ENCODE measurements at regions of chr6 and their contacts with region 1.

Region 1: DNA sequence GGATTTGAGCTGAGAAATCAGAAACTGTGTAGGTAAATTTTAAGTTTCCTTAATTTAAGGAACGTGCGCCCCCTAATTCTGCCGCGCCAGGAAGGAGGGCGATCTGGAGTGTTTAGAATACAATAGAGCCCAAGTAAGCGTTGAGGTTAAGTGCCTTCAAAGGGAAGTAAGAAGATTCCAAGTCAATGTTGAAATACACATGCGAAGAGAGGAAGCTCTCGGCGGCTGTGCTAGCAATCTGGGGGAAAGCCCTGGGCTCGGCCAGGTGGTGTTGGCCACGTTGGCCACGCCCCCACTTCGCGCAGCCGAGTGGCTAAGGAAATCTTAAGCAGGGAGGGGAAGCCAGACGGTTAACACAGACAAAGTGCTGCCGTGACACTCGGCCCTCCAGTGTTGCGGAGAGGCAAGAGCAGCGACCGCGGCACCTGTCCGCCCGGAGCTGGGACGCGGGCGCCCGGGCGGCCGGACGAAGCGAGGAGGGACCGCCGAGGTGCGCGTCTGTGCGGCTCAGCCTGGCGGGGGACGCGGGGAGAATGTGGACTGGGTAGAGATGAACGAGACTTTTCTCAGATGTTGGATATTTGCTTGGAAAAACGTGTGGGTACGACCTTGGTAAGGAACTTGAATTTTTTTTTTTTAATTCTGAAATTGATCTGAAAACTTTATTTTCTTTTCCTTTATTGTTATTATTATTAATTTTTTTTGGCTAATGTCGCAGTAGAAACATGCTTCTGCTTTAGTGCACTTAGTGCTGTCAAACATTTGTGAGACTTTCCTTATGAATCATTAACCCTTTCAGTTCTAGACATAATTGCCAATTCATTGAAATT is at the start of gene PRDM1:
- DNase-seq: peak; percentile 96
- H3K4me3 ChIP-seq: peak within 1 kb of the TSS; percentile 63 to 79 (median 73)
- H3K27ac ChIP-seq: peak within 1 kb of the TSS; percentile 86
- H3K4me1 ChIP-seq: peaks cover 37% of the 10 kb centered on the region
- H3K27me3 ChIP-seq: no peaks in the 10 kb centered on the region
- CTCF ChIP-seq: peak; percentile 31 to 67
- total RNA-seq, gene PRDM1: 5.7 to 17.7 TPM

Region 2: GRCh38 chr6:105431226-105431625 is 655.0 kb before region 1 on chr6:
- CTCF ChIA-PET with region 1: interaction called, 5 read pairs
- dilution Hi-C with region 1: no loop called
- in situ Hi-C with region 1: loop called in 1 of 2 experiments (anchors 25 kb)
- intact Hi-C with region 1: loop called (anchors 1 kb)
- DNase-seq: peak; percentile 46
- H3K4me3 ChIP-seq: no peak overlapping the region
- H3K27ac ChIP-seq: no peak overlapping the region
- H3K4me1 ChIP-seq: peaks cover 35% of the 10 kb centered on the region
- H3K27me3 ChIP-seq: no peaks in the 10 kb centered on the region
- CTCF ChIP-seq: peak; percentile 57

Region 3: GRCh38 chr6:105536961-105537360 is 549.2 kb before region 1 on chr6:
- CTCF ChIA-PET with region 1: no interaction called
- dilution Hi-C with region 1: no loop called
- in situ Hi-C with region 1: no loop called
- intact Hi-C with region 1: loop called (anchors 5 kb)
- DNase-seq: peak; percentile 96
- H3K4me3 ChIP-seq: no peak overlapping the region
- H3K27ac ChIP-seq: peak overlapping the region; percentile 96
- H3K4me1 ChIP-seq: peaks cover 19% of the 10 kb centered on the region
- H3K27me3 ChIP-seq: no peaks in the 10 kb centered on the region
- CTCF ChIP-seq: peak in 1 of 2 donors; percentile 10

Region 4: DNA sequence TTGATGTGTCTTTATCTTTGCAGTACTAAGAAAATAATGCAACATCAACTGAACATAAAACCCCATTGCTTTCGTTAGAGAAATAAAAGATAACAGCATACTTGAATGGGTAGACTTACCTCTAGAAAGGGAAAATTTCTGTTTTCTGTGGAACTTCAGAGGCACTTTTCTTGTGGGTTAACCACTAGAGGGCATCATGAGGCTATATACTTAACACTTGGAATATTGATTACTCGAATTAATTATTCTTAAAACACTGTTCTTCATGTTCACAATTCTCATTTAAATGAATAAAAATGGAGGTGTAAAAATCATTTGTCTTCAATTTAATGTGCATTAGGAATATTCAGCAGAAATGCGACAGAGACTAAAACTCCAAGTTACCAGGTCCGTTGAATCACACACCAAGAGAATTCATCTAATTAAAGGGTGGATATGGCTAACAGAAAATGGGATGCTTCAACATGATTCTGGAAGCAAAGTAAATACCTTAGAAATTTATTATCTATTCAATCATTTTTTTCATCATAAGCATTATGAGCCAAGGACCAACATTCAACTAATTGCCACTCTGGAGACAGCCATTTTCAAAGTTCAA is 352.5 kb before region 1 on chr6:
- CTCF ChIA-PET with region 1: no interaction called
- dilution Hi-C with region 1: no loop called
- in situ Hi-C with region 1: loop called in 1 of 2 experiments (anchors 25 kb)
- intact Hi-C with region 1: loop called (anchors 1 kb)
- DNase-seq: no peak
- H3K4me3 ChIP-seq: no peak overlapping the region
- H3K27ac ChIP-seq: no peak overlapping the region
- H3K4me1 ChIP-seq: no peaks in the 10 kb centered on the region
- H3K27me3 ChIP-seq: no peaks in the 10 kb centered on the region
- CTCF ChIP-seq: peak; percentile 59 to 62

Region 5: DNA sequence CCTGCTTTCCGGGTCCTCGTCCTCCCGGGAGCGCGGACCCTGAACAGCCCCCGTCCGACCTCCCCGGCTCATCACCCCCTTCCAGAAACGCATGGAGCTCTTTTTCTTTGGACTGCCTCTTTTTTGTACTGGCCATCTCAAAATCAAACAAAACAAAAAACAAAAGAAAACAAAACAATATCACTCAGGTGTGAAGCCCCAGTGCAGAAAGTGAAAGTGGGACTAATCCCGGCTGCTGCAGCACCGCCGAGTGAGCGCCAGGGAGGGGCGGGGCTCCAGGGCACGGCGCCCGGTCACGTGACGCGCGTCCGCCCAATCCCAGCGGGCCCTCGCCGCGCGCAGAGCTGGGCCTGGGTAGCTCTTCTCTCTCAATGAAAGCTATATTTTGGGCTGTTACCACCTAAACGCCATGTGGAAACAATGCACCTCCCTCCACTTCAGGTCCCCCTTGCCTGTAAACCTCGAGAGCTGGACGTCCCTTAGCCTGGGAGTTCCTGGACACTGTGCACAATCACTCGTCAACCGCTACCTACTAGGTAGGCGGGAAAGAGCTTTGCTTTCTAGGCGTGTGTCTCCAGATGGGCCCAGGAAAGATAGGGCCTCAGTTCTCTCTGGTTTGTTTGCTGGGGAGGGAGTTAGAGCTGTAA is 93.8 kb before region 1 on chr6:
- CTCF ChIA-PET with region 1: no interaction called
- dilution Hi-C with region 1: no loop called
- in situ Hi-C with region 1: no loop called
- intact Hi-C with region 1: loop called (anchors 1 kb)
- DNase-seq: peak; percentile 67
- H3K4me3 ChIP-seq: peak overlapping the region; percentile 61 to 76 (median 62)
- H3K27ac ChIP-seq: peak overlapping the region; percentile 67
- H3K4me1 ChIP-seq: peaks cover 25% of the 10 kb centered on the region
- H3K27me3 ChIP-seq: no peaks in the 10 kb centered on the region
- CTCF ChIP-seq: no peak

Region 6: GRCh38 chr6:106223300-106223930 is 137.2 kb after region 1 on chr6:
- CTCF ChIA-PET with region 1: no interaction called
- dilution Hi-C with region 1: no loop called
- in situ Hi-C with region 1: no loop called
- intact Hi-C with region 1: loop called (anchors 1 kb)
- DNase-seq: peak; percentile 58
- H3K4me3 ChIP-seq: no peak overlapping the region
- H3K27ac ChIP-seq: no peak overlapping the region
- H3K4me1 ChIP-seq: no peaks in the 10 kb centered on the region
- H3K27me3 ChIP-seq: no peaks in the 10 kb centered on the region
- CTCF ChIP-seq: peak; percentile 53 to 61

Region 7: GRCh38 chr6:106309766-106310373 is 223.7 kb after region 1 on chr6:
- CTCF ChIA-PET with region 1: no interaction called
- dilution Hi-C with region 1: no loop called
- in situ Hi-C with region 1: no loop called
- intact Hi-C with region 1: no loop called
- DNase-seq: peak; percentile 42
- H3K4me3 ChIP-seq: peak overlapping the region in 1 of 3 experiments; percentile 23
- H3K27ac ChIP-seq: peak overlapping the region; percentile 69
- H3K4me1 ChIP-seq: peaks cover 34% of the 10 kb centered on the region
- H3K27me3 ChIP-seq: no peaks in the 10 kb centered on the region
- CTCF ChIP-seq: no peak

Measured in mammary epithelial cell (primary cell).